Activated CD4-positive, alpha-beta memory T cell treated with anti-CD3 and anti-CD28 coated beads for 36 hours (primary cell): ENCODE measurements at regions of chr10 and their contacts with region 1.

Region 1: GRCh38 chr10:68348265-68348741 is 15.6 kb upstream of the PBLD start:
- DNase-seq: peak; percentile 58
- H3K4me3 Mint-ChIP-seq: no peak overlapping the region
- H3K27ac Mint-ChIP-seq: peak overlapping the region; percentile 29
- H3K4me1 Mint-ChIP-seq: peaks cover 10% of the 10 kb centered on the region
- H3K27me3 Mint-ChIP-seq: no peaks in the 10 kb centered on the region

Region 2: GRCh38 chr10:68364101-68364886 is 16.0 kb after region 1 on chr10:
- CTCF ChIA-PET with region 1: interaction called, 22 read pairs
- POLR2A ChIA-PET with region 1: interaction called, 3 read pairs
- intact Hi-C with region 1: no loop called
- DNase-seq: no peak
- H3K4me3 Mint-ChIP-seq: no peak overlapping the region
- H3K27ac Mint-ChIP-seq: no peak overlapping the region
- H3K4me1 Mint-ChIP-seq: peaks cover 3% of the 10 kb centered on the region
- H3K27me3 Mint-ChIP-seq: no peaks in the 10 kb centered on the region

Region 3: DNA sequence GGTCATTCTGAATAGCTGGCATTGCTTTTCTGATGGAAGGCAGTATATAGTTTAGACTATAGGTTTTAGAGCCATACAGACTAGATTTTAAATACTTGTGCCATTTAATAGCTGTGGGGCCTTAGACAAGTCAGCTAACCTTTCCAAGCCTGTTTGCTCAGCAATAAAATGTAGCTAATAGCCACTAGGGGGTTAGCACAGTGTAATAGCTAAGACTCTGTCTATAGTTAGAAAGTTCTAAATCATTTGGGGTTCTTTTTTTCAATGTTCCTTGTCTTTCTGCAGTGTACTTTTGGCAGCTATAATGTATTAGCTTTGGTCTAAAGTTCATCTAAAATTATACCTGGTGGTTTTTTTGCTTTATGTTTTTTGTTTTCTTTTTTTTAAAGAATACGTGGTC is 632.8 kb after region 1 on chr10:
- CTCF ChIA-PET with region 1: no interaction called
- POLR2A ChIA-PET with region 1: no interaction called
- intact Hi-C with region 1: no loop called
- DNase-seq: no peak
- H3K4me3 Mint-ChIP-seq: no peak overlapping the region
- H3K27ac Mint-ChIP-seq: no peak overlapping the region
- H3K4me1 Mint-ChIP-seq: peaks cover 6% of the 10 kb centered on the region
- H3K27me3 Mint-ChIP-seq: no peaks in the 10 kb centered on the region